CD8-positive, alpha-beta T cell (primary cell): ENCODE measurements at regions of chr11 and their contacts with region 1.

Region 1: DNA sequence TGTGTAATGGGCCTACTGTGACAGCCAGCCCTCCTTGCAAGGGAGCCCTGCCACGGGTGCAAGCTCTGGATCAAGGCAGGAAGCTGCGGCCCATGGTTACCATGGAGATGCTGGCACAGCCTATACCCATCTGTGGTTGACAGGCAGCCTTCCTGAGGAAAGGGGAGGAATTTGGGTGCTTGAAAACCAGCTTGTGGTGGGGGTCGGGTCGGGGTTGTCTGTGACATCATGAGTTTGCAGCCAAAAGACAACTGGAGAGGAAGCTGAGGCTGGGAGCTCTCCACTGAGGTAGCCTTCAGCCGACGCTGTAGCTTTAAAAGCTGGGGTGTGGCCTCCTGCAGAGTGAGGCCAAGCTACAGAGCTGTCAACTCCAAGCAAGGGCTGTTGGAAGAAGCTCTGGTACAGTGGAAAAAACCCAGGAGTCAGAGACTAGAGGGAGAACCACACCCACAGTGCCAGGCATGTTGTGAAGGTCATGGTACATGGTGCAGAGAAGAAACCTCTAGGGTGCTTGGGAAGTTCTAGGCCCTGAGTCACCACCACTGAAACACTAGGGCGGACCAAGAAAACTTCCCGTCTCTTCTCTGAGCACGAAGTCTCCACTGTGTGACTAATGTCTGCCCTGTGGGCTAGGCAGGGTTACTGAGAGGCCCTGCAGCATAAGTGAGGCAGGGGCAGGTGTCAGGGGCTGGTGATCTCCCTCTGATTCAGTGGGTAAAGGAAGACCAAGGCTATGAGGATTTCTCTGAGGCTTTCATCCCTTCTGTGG is 10.8 kb upstream of the LDHA start:
- DNase-seq: peak; percentile 20 to 88 (median 63)
- ATAC-seq: peak; percentile 86
- H3K4me3 ChIP-seq: peak overlapping the region in 1 of 2 experiments; percentile 29
- H3K4me3 Mint-ChIP-seq: peak overlapping the region; percentile 67
- H3K27ac ChIP-seq: peak overlapping the region; percentile 55 to 83
- H3K27ac Mint-ChIP-seq: peak overlapping the region; percentile 98
- H3K4me1 ChIP-seq: peaks cover 30% of the 10 kb centered on the region
- H3K4me1 Mint-ChIP-seq: peaks cover 30% of the 10 kb centered on the region
- H3K27me3 ChIP-seq: no peaks in the 10 kb centered on the region
- H3K27me3 Mint-ChIP-seq: no peaks in the 10 kb centered on the region
- CTCF ChIP-seq: no peak

Region 2: GRCh38 chr11:17528181-17528691 is 855.3 kb before region 1 on chr11:
- CTCF ChIA-PET with region 1: no interaction called
- POLR2A ChIA-PET with region 1: no interaction called
- intact Hi-C with region 1: no loop called
- DNase-seq: peak in 6 of 9 experiments; percentile 15 to 60 (median 35)
- ATAC-seq: peak; percentile 55
- H3K4me3 ChIP-seq: no peak overlapping the region
- H3K4me3 Mint-ChIP-seq: no peak overlapping the region
- H3K27ac ChIP-seq: no peak overlapping the region
- H3K27ac Mint-ChIP-seq: no peak overlapping the region
- H3K4me1 ChIP-seq: no peaks in the 10 kb centered on the region
- H3K4me1 Mint-ChIP-seq: no peaks in the 10 kb centered on the region
- H3K27me3 ChIP-seq: no peaks in the 10 kb centered on the region
- H3K27me3 Mint-ChIP-seq: peaks cover 5% of the 10 kb centered on the region
- CTCF ChIP-seq: peak; percentile 34

Region 3: DNA sequence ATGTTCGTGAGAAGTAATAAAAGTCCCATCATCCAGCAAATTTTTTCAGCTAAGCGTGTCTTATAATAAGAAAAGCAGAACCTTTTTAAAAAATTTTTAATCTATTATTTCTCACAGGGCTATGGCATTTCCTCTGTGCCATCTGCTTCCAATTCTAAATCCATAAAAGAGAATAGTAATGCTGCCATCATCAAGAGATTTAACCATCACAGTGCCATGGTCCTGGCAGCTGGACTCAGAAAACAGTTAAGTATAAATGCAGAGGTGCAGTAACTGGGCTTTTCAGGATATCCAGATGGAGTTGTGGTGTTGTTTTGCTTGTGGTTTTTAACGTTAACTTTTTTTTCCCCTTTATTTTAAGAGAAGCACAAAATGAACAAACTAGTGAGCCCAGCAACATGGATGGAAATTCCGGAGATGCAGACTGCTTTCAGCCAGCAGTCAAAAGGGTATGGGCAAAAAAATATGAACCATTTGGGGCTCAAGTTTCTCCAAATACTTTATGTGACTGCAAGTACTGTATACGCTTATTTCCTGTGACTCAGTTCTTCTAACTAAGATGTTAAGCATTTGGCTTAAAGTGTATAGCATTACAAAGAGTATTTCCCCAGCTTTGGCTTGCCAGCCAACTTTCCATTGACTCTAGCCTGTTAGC is 36.0 kb before region 1 on chr11:
- CTCF ChIA-PET with region 1: no interaction called
- POLR2A ChIA-PET with region 1: no interaction called
- intact Hi-C with region 1: no loop called
- DNase-seq: no peak
- ATAC-seq: no peak
- H3K4me3 ChIP-seq: no peak overlapping the region
- H3K4me3 Mint-ChIP-seq: no peak overlapping the region
- H3K27ac ChIP-seq: no peak overlapping the region
- H3K27ac Mint-ChIP-seq: peak overlapping the region; percentile 46
- H3K4me1 ChIP-seq: no peaks in the 10 kb centered on the region
- H3K4me1 Mint-ChIP-seq: no peaks in the 10 kb centered on the region
- H3K27me3 ChIP-seq: no peaks in the 10 kb centered on the region
- H3K27me3 Mint-ChIP-seq: no peaks in the 10 kb centered on the region
- CTCF ChIP-seq: no peak

Region 4: DNA sequence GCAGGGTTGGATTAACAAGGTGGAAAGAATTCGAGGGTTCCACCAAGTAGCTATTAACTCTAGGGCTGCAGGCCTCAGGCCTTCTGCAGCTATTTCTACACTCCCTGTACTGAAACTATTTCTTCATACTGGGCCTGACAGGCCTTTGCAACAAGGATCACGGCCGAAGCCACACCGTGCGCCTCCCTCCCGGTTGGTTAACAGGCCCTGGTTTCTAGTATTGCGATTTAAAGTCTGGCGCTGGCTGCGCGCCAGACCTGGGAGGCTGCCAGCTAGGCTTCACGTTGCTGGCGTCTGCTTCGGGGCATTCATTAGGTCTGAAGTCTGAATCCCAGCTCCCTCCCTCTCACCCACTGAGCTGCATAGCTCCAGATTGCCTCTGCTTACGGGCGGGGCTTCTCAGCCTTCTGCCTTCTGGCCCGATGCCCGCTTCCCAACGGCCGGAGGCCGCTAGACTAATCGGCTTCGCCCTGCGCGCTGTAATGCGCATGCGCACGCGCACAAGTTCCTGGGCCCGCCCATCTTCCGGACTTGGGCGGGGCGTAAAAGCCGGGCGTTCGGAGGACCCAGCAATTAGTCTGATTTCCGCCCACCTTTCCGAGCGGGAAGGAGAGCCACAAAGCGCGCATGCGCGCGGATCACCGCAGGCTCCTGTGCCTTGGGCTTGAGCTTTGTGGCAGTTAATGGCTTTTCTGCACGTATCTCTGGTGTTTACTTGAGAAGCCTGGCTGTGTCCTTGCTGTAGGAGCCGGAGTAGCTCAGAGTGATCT is 12.3 kb after region 1 on chr11:
- CTCF ChIA-PET with region 1: interaction called, 3 read pairs
- POLR2A ChIA-PET with region 1: interaction called, 86 read pairs
- intact Hi-C with region 1: loop called (anchors 1 kb)
- DNase-seq: peak; percentile 89 to 98 (median 92)
- ATAC-seq: peak; percentile 54
- H3K4me3 ChIP-seq: peak overlapping the region; percentile 86 to 98
- H3K4me3 Mint-ChIP-seq: peak overlapping the region; percentile 97
- H3K27ac ChIP-seq: peak overlapping the region; percentile 90
- H3K27ac Mint-ChIP-seq: peak overlapping the region; percentile 96
- H3K4me1 ChIP-seq: peaks cover 22% of the 10 kb centered on the region
- H3K4me1 Mint-ChIP-seq: peaks cover 35% of the 10 kb centered on the region
- H3K27me3 ChIP-seq: no peaks in the 10 kb centered on the region
- H3K27me3 Mint-ChIP-seq: no peaks in the 10 kb centered on the region
- CTCF ChIP-seq: no peak

Region 5: GRCh38 chr11:18907391-18907790 is 523.8 kb after region 1 on chr11:
- CTCF ChIA-PET with region 1: no interaction called
- POLR2A ChIA-PET with region 1: no interaction called
- intact Hi-C with region 1: no loop called
- DNase-seq: no peak
- ATAC-seq: no peak
- H3K4me3 ChIP-seq: no peak overlapping the region
- H3K4me3 Mint-ChIP-seq: no peak overlapping the region
- H3K27ac ChIP-seq: no peak overlapping the region
- H3K27ac Mint-ChIP-seq: no peak overlapping the region
- H3K4me1 ChIP-seq: no peaks in the 10 kb centered on the region
- H3K4me1 Mint-ChIP-seq: no peaks in the 10 kb centered on the region
- H3K27me3 ChIP-seq: no peaks in the 10 kb centered on the region
- H3K27me3 Mint-ChIP-seq: peaks cover 12% of the 10 kb centered on the region
- CTCF ChIP-seq: no peak

Region 6: DNA sequence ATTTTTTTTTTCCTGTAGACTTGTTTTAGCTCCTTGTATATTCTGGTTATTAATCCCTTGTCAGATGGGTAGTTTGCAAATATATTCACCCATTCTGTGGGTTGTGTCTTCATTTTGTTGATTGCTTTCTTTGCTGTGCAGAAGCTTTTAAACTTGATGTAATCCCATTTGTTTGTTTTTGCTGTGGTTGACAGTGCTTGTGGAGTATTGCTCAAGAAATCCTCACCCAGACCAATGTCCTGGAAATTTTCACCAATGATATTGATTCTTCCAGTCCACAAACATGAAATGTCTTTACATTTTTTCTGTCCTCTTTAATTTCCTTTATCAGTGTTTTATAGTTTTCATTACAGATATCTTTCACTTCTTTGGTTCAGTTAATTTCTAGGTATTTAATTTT is 611.3 kb after region 1 on chr11:
- CTCF ChIA-PET with region 1: no interaction called
- POLR2A ChIA-PET with region 1: no interaction called
- intact Hi-C with region 1: no loop called
- DNase-seq: no peak
- ATAC-seq: no peak
- H3K4me3 ChIP-seq: no peak overlapping the region
- H3K4me3 Mint-ChIP-seq: no peak overlapping the region
- H3K27ac ChIP-seq: no peak overlapping the region
- H3K27ac Mint-ChIP-seq: no peak overlapping the region
- H3K4me1 ChIP-seq: no peaks in the 10 kb centered on the region
- H3K4me1 Mint-ChIP-seq: no peaks in the 10 kb centered on the region
- H3K27me3 ChIP-seq: no peaks in the 10 kb centered on the region
- H3K27me3 Mint-ChIP-seq: peaks cover 2% of the 10 kb centered on the region
- CTCF ChIP-seq: no peak